Naive thymus-derived CD4-positive, alpha-beta T cell (primary cell): ENCODE measurements at regions of chr2 and their contacts with region 1.

Region 1: DNA sequence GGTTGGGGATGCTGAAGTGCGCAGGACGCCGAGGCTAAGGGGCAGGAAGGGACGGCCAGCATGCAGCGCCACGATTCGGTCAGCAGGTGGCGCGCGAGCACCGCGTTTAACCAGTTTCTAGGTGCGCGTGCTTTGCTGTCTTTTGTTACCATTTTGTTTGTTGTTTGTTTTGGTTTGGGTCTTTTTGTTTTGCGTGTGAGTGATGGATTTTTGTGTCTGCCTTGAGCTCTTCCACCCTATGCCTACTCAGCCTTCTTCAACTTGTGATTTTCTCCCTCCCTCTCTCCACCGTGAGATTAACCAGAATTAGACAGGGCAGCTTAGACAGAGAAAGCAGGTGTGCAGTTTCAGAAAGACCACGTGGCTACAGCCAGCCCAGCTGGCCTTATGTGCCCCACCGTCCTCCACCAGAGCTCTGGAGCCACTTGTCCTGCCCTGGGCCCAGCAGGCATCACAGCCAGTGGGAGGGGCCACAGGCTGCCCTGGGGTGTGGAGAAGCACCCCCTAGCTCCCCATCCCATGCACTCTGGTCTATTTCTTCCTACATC is 180.2 kb downstream of the RNF144A start:
- DNase-seq: peak; percentile 47 to 77 (median 72)
- ATAC-seq: peak; percentile 92
- H3K4me3 ChIP-seq: peak overlapping the region; percentile 56
- H3K4me3 Mint-ChIP-seq: peak overlapping the region; percentile 56 to 82 (median 76)
- H3K27ac ChIP-seq: no peak overlapping the region
- H3K27ac Mint-ChIP-seq: peak overlapping the region in 5 of 9 donors; percentile 22 to 86 (median 45)
- H3K4me1 ChIP-seq: peaks cover 0 to 7% of the 10 kb centered on the region in 2 donors
- H3K4me1 Mint-ChIP-seq: peaks cover 6 to 8% (median 8%) of the 10 kb centered on the region in 7 donors
- H3K27me3 ChIP-seq: no peaks in the 10 kb centered on the region
- H3K27me3 Mint-ChIP-seq: no peaks in the 10 kb centered on the region

Region 2: GRCh38 chr2:7037340-7038333 is 59.8 kb before region 1 on chr2:
- CTCF ChIA-PET with region 1: no interaction called
- POLR2A ChIA-PET with region 1: no interaction called
- intact Hi-C with region 1: loop called in 1 of 2 experiments (anchors 1 kb)
- DNase-seq: peak; percentile 16 to 64 (median 56)
- ATAC-seq: peak; percentile 90
- H3K4me3 ChIP-seq: no peak overlapping the region
- H3K4me3 Mint-ChIP-seq: no peak overlapping the region
- H3K27ac ChIP-seq: no peak overlapping the region
- H3K27ac Mint-ChIP-seq: peak overlapping the region in 8 of 9 donors; percentile 25 to 74 (median 61)
- H3K4me1 ChIP-seq: no peaks in the 10 kb centered on the region
- H3K4me1 Mint-ChIP-seq: peaks cover 2 to 20% (median 10%) of the 10 kb centered on the region in 7 donors
- H3K27me3 ChIP-seq: no peaks in the 10 kb centered on the region
- H3K27me3 Mint-ChIP-seq: no peaks in the 10 kb centered on the region

Region 3: DNA sequence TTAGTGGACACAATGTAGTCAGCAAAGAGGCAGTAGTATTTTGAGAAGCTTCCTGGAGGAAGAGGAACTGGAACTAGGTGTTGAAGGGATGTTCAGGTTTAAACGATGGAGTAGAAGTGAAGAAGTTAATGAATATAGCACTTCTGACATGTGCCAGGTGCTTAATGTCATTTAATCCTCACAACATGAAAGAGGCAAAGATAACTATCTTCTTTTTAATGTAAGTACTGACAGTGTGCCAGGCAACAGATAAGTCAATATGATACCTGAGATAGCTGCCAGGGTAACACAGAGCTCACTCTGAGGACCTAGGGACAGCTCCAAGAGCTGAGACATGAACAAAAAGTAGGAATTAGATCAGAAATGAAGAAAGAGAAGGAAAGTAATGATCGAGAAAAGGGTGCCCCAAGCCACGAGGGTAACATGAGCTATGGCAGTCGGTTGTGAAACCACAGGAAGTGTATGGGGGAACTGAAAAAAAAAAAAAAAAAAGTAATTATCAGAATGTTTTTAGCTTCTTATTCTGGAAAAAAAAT is 39.5 kb before region 1 on chr2:
- CTCF ChIA-PET with region 1: interaction called, 5 read pairs
- POLR2A ChIA-PET with region 1: no interaction called
- intact Hi-C with region 1: loop called in 1 of 2 experiments (anchors 2 kb)
- DNase-seq: peak in 6 of 9 donors; percentile 48 to 69 (median 64)
- ATAC-seq: peak; percentile 66
- H3K4me3 ChIP-seq: peak overlapping the region; percentile 24
- H3K4me3 Mint-ChIP-seq: peak overlapping the region in 9 of 10 donors; percentile 51 to 91 (median 79)
- H3K27ac ChIP-seq: peak overlapping the region; percentile 65
- H3K27ac Mint-ChIP-seq: peak overlapping the region in 2 of 9 donors; percentile 90 to 97
- H3K4me1 ChIP-seq: peaks cover 37 to 53% of the 10 kb centered on the region in 2 donors
- H3K4me1 Mint-ChIP-seq: peaks cover 0 to 18% (median 6%) of the 10 kb centered on the region in 7 donors
- H3K27me3 ChIP-seq: no peaks in the 10 kb centered on the region
- H3K27me3 Mint-ChIP-seq: no peaks in the 10 kb centered on the region

Region 4: GRCh38 chr2:7203055-7203467 is 105.6 kb after region 1 on chr2:
- CTCF ChIA-PET with region 1: interaction called, 4 read pairs
- POLR2A ChIA-PET with region 1: no interaction called
- intact Hi-C with region 1: loop called in 1 of 2 experiments (anchors 2 kb)
- DNase-seq: peak; percentile 31 to 65 (median 55)
- ATAC-seq: peak; percentile 81
- H3K4me3 ChIP-seq: no peak overlapping the region
- H3K4me3 Mint-ChIP-seq: no peak overlapping the region
- H3K27ac ChIP-seq: no peak overlapping the region
- H3K27ac Mint-ChIP-seq: no peak overlapping the region
- H3K4me1 ChIP-seq: no peaks in the 10 kb centered on the region
- H3K4me1 Mint-ChIP-seq: peaks cover 0 to 6% (median 0%) of the 10 kb centered on the region in 7 donors
- H3K27me3 ChIP-seq: no peaks in the 10 kb centered on the region
- H3K27me3 Mint-ChIP-seq: no peaks in the 10 kb centered on the region

Region 5: GRCh38 chr2:8761529-8762164 is 1664.2 kb after region 1 on chr2:
- CTCF ChIA-PET with region 1: no interaction called
- POLR2A ChIA-PET with region 1: no interaction called
- intact Hi-C with region 1: loop called (anchors 1 kb)
- DNase-seq: peak in 4 of 9 donors; percentile 1 to 17 (median 10)
- ATAC-seq: no peak
- H3K4me3 ChIP-seq: no peak overlapping the region
- H3K4me3 Mint-ChIP-seq: no peak overlapping the region
- H3K27ac ChIP-seq: no peak overlapping the region
- H3K27ac Mint-ChIP-seq: no peak overlapping the region
- H3K4me1 ChIP-seq: no peaks in the 10 kb centered on the region
- H3K4me1 Mint-ChIP-seq: peaks cover 0 to 10% (median 0%) of the 10 kb centered on the region in 7 donors
- H3K27me3 ChIP-seq: no peaks in the 10 kb centered on the region
- H3K27me3 Mint-ChIP-seq: no peaks in the 10 kb centered on the region